GM12878 (cell line): ENCODE measurements at regions of chr17 and their contacts with region 1.

Region 1: DNA sequence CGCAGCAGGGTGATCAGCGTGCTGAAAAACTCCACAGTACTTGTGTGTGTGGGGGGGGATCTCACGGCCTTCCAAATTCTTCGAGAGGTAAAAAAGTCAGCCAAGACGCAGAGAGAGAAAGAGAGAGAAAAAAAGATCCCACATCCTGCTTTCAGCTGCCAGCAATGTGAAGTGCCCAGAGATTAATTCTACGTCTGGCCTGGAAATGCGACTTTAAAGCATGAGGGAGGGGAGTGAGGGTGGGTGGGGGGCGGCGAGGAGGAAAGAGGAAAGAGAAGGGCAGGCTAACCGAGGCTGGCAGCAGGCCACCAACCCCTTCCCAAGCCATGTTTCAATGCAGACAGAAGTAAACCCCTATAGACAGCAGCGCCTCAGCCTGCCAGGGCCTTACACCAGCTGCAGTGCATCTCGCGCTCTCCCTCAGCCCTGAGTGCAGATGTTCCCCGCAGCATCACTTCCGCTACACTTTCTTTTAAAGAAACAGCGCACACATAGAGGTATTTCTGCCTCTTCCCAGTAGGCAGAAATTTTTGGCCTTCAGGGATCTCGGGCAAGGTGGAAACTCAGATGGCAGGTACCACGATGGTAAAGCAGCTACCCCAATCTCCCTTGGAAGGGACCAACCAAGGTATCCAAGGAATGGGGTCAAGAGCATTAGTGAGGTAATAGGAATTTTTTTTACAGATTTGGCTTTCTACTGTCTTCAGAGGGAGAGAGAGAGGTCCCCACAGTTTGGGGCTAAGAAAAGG is 87.8 kb downstream of the SMG6 start:
- DNase-seq: no peak
- ATAC-seq: peak; percentile 99
- H3K4me3 ChIP-seq: peak overlapping the region; percentile 77
- H3K27ac ChIP-seq: peak overlapping the region; percentile 100
- H3K4me1 ChIP-seq: peaks cover 32% of the 10 kb centered on the region
- H3K27me3 ChIP-seq: no peaks in the 10 kb centered on the region
- CTCF ChIP-seq: 0 out of 6 replicates have a peak, but pooled peaks of 1 of the 3 experiments have one; percentile 6
- EP300 ChIP-seq: no peak
- POLR2A ChIP-seq: peak; percentile 90
- RAD21 ChIP-seq: 0 out of 2 replicates have a peak, but pooled peaks have one; percentile 1

Region 2: DNA sequence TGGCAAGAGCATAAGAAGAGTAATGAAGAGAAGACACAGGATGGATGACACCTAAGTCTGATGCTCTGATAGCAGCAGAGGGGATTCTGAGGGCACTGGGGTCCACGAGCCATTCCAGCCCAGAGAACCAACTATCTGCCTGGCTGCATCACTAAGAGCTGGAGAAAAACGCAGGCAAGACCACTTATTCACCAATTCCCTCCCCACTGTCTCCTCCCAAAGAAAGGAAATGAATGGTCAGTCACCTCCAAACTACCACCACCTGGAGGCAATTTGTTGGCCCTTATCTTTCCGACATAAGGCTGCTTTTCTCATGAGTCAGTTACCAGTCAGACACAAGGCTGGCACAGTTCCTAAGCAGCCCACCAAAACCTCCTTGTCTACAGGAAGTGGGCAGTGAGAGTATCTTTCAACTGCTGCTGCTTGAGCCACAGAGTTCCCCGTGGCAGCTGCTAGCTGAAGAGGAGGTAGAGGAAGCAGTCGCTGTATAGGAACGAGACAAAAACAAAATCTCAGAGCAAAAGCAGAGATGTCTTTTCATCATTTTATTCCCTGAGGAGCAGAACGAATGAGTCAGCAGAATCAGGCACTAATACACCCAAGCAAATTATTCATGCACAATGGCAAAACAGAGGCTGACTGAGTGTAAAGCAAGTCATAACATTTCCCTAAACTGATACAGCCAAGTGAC is 23.3 kb before region 1 on chr17:
- CTCF ChIA-PET with region 1: interaction called, 9 read pairs
- POLR2A ChIA-PET with region 1: interaction called, 7 read pairs
- RAD21 ChIA-PET with region 1: interaction called, 5 read pairs
- SMC1A ChIA-PET with region 1: interaction called, 10 read pairs
- in situ Hi-C with region 1: no loop called
- intact Hi-C with region 1: no loop called
- DNase-seq: peak; percentile 72
- ATAC-seq: peak; percentile 93
- H3K4me3 ChIP-seq: no peak overlapping the region
- H3K27ac ChIP-seq: peak overlapping the region; percentile 52
- H3K4me1 ChIP-seq: peaks cover 35% of the 10 kb centered on the region
- H3K27me3 ChIP-seq: no peaks in the 10 kb centered on the region
- CTCF ChIP-seq: no peak
- EP300 ChIP-seq: no peak
- POLR2A ChIP-seq: no peak
- RAD21 ChIP-seq: no peak

Region 3: GRCh38 chr17:2202996-2203575 is 12.7 kb before region 1 on chr17:
- CTCF ChIA-PET with region 1: interaction called, 3 read pairs
- POLR2A ChIA-PET with region 1: interaction called, 7 read pairs
- RAD21 ChIA-PET with region 1: interaction called, 3 read pairs
- SMC1A ChIA-PET with region 1: interaction called, 16 read pairs
- in situ Hi-C with region 1: no loop called
- intact Hi-C with region 1: no loop called
- DNase-seq: no peak
- ATAC-seq: no peak
- H3K4me3 ChIP-seq: no peak overlapping the region
- H3K27ac ChIP-seq: no peak overlapping the region
- H3K4me1 ChIP-seq: no peaks in the 10 kb centered on the region
- H3K27me3 ChIP-seq: no peaks in the 10 kb centered on the region
- CTCF ChIP-seq: no peak
- EP300 ChIP-seq: no peak
- POLR2A ChIP-seq: no peak
- RAD21 ChIP-seq: no peak

Region 4: DNA sequence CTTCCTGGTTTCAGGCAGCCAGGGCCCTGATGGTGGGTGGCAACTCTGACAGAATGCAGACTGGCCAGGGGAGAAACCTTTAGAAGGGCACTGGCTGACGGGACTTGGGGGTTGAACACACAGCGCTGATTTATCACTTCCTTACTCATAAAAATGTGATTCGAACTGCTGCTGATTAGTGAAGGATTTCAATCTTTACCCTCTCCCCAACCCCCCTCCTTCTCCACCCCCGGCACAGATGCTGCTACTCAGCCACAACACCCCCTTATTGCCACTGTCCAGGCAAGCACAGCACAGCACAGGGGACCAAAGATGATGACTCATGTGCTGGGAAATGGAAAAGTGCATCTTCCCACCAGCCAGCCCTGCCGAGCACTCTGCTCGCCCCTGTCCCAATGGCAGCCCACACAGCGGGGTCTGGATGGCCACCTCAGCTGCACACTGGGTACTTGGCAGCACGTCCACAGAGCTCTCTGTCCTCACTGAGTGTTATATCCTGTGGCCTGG is 17.7 kb after region 1 on chr17:
- CTCF ChIA-PET with region 1: interaction called, 37 read pairs
- POLR2A ChIA-PET with region 1: interaction called, 4 read pairs
- RAD21 ChIA-PET with region 1: interaction called, 4 read pairs
- SMC1A ChIA-PET with region 1: interaction called, 22 read pairs
- in situ Hi-C with region 1: no loop called
- intact Hi-C with region 1: no loop called
- DNase-seq: no peak
- ATAC-seq: no peak
- H3K4me3 ChIP-seq: no peak overlapping the region
- H3K27ac ChIP-seq: no peak overlapping the region
- H3K4me1 ChIP-seq: peaks cover 43% of the 10 kb centered on the region
- H3K27me3 ChIP-seq: no peaks in the 10 kb centered on the region
- CTCF ChIP-seq: no peak
- EP300 ChIP-seq: no peak
- POLR2A ChIP-seq: no peak
- RAD21 ChIP-seq: no peak

Region 5: DNA sequence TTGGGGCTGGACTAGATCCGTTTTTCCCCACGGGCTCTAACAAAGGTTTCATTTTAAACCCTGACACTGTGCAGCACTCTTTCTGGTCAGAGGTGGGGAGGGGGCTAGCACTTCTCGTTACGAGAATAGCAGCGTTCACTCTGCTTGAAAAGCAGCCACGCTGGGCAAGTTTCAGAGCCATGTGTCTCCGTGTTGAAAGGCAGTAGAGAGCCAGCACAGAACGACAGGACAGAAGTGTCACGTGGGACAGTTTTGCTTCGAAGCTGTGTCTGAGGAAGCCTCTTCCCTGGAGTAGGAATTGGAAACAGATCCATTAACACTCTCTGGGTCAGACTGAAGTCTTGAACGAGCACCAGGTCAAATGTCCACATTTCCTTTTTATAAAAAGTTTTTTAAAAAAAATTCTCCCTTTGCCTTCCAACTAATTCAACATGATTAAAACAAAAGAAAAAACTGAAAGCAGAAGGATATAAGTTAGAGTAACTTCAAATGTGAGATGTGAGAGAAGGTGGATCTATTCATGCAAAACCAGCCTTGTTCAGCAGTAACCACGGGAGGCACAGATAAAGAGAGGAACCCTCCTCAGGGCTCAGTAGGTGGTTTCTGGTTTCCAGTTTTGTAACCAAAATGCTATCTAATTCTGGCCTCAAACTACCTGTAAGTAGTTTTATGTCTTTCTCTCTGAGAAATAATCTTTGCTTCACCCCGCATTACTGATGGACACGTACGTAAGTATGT is 22.8 kb after region 1 on chr17:
- CTCF ChIA-PET with region 1: interaction called, 37 read pairs
- POLR2A ChIA-PET with region 1: interaction called, 4 read pairs
- RAD21 ChIA-PET with region 1: interaction called, 49 read pairs
- SMC1A ChIA-PET with region 1: interaction called, 49 read pairs
- in situ Hi-C with region 1: no loop called
- intact Hi-C with region 1: no loop called
- DNase-seq: peak; percentile 86
- ATAC-seq: peak; percentile 88
- H3K4me3 ChIP-seq: peak overlapping the region; percentile 45; the same call in 1 of the 2 replicates
- H3K27ac ChIP-seq: peak overlapping the region; percentile 99
- H3K4me1 ChIP-seq: peaks cover 50% of the 10 kb centered on the region
- H3K27me3 ChIP-seq: no peaks in the 10 kb centered on the region
- CTCF ChIP-seq: no peak
- EP300 ChIP-seq: 0 out of 4 replicates have a peak, but pooled peaks of 1 of the 2 experiments have one; percentile 34
- POLR2A ChIP-seq: peak; percentile 62
- RAD21 ChIP-seq: no peak

Region 6: DNA sequence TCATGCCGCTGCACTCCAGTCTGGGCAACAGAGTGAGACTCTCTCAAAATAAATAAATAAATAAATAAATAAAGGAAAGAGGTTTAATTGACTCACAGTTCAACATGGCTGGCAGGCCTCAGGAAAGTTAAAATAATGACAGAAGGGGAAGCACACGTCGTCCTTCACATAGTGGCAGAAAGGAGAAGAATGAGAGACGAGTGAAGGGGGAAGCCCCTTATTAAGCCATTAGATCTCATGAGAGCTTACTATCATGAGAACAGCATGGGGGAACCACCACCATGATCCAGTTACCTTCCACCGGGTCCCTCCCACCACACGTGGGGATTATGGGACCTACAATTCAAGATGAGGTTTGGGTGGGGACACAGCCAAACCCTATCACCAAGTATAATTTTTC is 432.2 kb after region 1 on chr17:
- CTCF ChIA-PET with region 1: no interaction called
- POLR2A ChIA-PET with region 1: no interaction called
- RAD21 ChIA-PET with region 1: no interaction called
- SMC1A ChIA-PET with region 1: no interaction called
- in situ Hi-C with region 1: no loop called
- intact Hi-C with region 1: no loop called
- DNase-seq: no peak
- ATAC-seq: no peak
- H3K4me3 ChIP-seq: no peak overlapping the region
- H3K27ac ChIP-seq: no peak overlapping the region
- H3K4me1 ChIP-seq: no peaks in the 10 kb centered on the region
- H3K27me3 ChIP-seq: no peaks in the 10 kb centered on the region
- CTCF ChIP-seq: no peak
- EP300 ChIP-seq: no peak
- POLR2A ChIP-seq: no peak
- RAD21 ChIP-seq: no peak